Natural killer cell (primary cell): ENCODE measurements at regions of chr21 and their contacts with region 1.

Region 1: DNA sequence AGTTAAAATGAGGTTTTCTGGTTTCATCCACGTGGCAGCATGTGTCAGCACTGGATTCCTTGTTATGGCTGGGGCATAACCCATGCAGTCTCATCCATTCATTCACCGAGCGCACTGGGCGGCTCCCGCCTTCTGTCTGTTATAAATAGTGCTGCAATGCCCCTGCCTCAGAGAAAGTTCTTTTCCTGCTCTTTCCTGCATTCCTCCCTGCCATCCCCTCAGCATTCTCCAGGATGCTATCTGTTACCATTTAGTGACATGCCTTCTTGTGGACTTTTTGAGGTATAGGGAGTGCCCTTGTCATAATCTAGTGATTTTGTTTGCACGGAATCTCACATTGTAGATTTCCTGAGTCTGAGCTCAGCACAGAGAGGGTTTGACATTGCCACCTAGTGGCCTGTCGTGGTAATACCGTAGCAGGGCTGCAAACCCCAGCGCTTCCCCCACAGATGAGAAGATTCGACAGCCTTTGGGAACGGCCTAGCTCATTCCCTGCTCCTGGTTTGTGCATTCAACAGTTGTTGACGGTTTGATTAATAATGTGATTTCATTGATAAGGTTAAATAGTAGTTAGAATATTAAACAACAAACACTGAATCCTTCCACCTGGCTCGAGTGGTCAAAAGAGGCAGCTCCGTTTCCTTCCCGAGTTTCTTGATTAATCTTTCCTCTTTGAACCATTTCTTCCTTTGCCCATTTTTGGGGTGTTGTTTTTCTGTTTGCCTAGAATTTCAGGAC is 46.3 kb downstream of the UMODL1 start:
- DNase-seq: peak; percentile 67 to 88
- ATAC-seq: peak; percentile 76 to 96 (median 90)
- H3K4me3 ChIP-seq: no peak overlapping the region
- H3K4me3 Mint-ChIP-seq: no peak overlapping the region
- H3K27ac ChIP-seq: no peak overlapping the region
- H3K27ac Mint-ChIP-seq: no peak overlapping the region
- H3K4me1 ChIP-seq: peaks cover 16% of the 10 kb centered on the region
- H3K4me1 Mint-ChIP-seq: peaks cover 18 to 20% of the 10 kb centered on the region in 2 donors
- H3K27me3 ChIP-seq: peaks cover 24% of the 10 kb centered on the region
- H3K27me3 Mint-ChIP-seq: peaks cover 66 to 82% of the 10 kb centered on the region in 2 donors
- CTCF ChIP-seq: peak; percentile 90

Region 2: GRCh38 chr21:41612674-41613532 is 504.5 kb before region 1 on chr21:
- intact Hi-C with region 1: loop called (anchors 10 kb)
- DNase-seq: peak in 1 of 2 donors; percentile 22
- ATAC-seq: peak in 1 of 3 donors; percentile 29
- H3K4me3 ChIP-seq: no peak overlapping the region
- H3K4me3 Mint-ChIP-seq: no peak overlapping the region
- H3K27ac ChIP-seq: no peak overlapping the region
- H3K27ac Mint-ChIP-seq: no peak overlapping the region
- H3K4me1 ChIP-seq: no peaks in the 10 kb centered on the region
- H3K4me1 Mint-ChIP-seq: no peaks in the 10 kb centered on the region
- H3K27me3 ChIP-seq: peaks cover 5% of the 10 kb centered on the region
- H3K27me3 Mint-ChIP-seq: peaks cover 6 to 36% of the 10 kb centered on the region in 2 donors
- CTCF ChIP-seq: no peak

Region 3: DNA sequence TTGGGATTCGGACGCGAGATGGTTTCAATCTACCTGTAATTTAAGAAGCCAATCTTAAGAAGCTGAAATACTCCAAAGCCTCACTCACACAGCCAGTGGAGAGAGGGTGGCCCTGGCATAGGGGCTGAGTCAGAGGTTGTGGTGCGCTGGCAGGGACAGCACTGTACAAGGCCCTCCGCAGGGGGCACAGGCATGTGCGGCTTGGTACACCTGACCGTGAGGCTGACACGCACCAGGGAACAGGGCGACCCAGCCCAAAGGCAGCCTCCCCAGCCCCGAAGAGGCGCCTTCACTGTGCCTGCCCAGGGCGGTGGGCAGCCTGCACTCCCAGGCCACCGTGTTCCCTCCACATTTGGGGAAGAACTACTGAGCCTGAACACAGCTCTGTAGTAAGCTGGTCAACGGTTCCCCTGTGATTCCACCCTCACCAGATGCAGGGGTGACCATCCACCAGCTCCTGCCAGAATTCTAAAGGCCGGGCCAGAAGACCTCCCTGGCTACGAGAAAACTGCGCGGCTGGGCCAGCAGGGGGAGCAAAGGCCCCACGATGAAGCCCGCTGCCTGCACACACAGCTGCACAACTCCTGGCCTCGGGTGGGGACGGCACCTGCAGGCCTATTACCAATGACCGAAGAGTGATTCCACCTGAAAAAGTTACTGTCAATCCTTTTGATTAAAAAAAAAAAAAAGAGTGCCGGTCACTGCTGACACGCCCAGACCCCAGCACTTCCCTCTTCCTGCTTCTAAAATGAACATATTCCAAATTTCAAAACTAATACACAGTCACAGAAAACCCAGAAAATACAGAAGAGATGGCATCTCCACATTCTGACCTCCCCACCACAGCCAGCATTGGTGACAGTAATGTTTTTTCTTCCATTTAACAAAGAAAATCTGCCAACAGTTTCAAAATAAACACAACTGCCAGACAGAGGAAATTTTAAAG is 300.9 kb before region 1 on chr21:
- intact Hi-C with region 1: loop called (anchors 1 kb)
- DNase-seq: peak; percentile 39 to 78
- ATAC-seq: peak in 2 of 3 donors; percentile 55 to 75
- H3K4me3 ChIP-seq: no peak overlapping the region
- H3K4me3 Mint-ChIP-seq: no peak overlapping the region
- H3K27ac ChIP-seq: no peak overlapping the region
- H3K27ac Mint-ChIP-seq: no peak overlapping the region
- H3K4me1 ChIP-seq: no peaks in the 10 kb centered on the region
- H3K4me1 Mint-ChIP-seq: no peaks in the 10 kb centered on the region
- H3K27me3 ChIP-seq: no peaks in the 10 kb centered on the region
- H3K27me3 Mint-ChIP-seq: no peaks in the 10 kb centered on the region
- CTCF ChIP-seq: peak; percentile 77

Region 4: DNA sequence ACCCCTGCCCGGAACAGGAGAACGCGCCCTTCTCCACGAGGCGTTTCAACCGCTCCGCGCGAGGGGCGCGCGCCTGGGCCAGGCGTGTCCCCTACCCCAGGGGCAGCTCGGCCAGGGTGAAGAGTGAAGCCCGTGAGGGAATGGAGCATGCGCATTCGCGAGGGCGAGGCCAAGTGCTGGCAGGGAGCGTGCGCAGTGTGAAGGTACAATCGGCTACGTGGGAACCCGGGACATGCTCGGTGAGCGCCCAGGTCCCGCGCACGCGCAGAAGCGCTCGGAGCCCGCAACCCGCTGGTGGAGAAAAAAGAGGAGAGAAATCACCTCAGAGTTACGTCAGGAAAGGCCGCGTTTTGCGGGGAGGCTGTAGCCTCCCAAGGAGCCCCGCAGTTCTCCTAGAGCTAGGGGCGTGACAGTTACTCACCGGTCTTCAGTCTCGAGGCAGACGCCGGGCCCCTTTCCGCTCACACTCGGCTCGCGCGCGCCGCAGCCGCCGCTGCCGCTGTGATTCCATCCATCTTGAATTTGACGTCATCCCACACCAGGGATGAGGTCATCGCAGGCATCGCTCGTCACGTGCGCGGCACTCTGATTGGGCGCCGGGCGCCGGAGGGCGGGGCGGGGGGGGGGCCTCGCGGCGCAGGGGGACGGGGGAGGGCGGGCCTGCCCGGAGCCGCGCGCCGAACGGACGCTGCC is 107.4 kb before region 1 on chr21 and contains the start of gene ZBTB21:
- intact Hi-C with region 1: loop called (anchors 5 kb)
- DNase-seq: peak; percentile 96 to 100
- ATAC-seq: peak; percentile 75 to 89 (median 79)
- H3K4me3 ChIP-seq: peak within 1 kb of the TSS; percentile 97
- H3K4me3 Mint-ChIP-seq: peak within 1 kb of the TSS; percentile 94
- H3K27ac ChIP-seq: peak within 1 kb of the TSS; percentile 100
- H3K27ac Mint-ChIP-seq: peak within 1 kb of the TSS; percentile 95 to 98
- H3K4me1 ChIP-seq: peaks cover 15% of the 10 kb centered on the region
- H3K4me1 Mint-ChIP-seq: peaks cover 6 to 20% of the 10 kb centered on the region in 2 donors
- H3K27me3 ChIP-seq: no peaks in the 10 kb centered on the region
- H3K27me3 Mint-ChIP-seq: peaks cover 0 to 11% of the 10 kb centered on the region in 2 donors
- CTCF ChIP-seq: no peak
- total RNA-seq, gene ZBTB21: 78.2 to 113 (median 100) TPM